ENCODE measurements at regions of chr4 and their contacts with region 1.

Region 1: DNA sequence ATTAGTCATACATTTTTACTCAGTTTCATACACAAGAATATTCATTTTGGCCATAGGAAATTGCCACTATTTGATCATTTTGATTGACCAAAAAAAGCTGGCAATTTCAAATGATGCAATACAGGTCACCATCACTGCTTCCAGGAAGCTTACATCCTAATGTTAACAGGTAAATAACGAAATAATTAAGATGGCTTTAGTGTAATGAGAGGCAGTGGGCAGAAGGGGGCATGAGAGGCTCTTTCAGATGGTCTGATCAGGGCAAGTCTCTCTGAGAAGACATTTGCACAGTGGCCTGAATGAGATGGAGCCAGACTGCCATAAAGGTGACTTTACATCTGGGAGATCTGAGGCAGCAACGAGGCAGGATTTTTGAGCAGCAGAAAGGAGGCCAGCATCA is 170.7 kb downstream of the SLIT2 start:
- DNase-seq: peak; percentile 73

Region 2: DNA sequence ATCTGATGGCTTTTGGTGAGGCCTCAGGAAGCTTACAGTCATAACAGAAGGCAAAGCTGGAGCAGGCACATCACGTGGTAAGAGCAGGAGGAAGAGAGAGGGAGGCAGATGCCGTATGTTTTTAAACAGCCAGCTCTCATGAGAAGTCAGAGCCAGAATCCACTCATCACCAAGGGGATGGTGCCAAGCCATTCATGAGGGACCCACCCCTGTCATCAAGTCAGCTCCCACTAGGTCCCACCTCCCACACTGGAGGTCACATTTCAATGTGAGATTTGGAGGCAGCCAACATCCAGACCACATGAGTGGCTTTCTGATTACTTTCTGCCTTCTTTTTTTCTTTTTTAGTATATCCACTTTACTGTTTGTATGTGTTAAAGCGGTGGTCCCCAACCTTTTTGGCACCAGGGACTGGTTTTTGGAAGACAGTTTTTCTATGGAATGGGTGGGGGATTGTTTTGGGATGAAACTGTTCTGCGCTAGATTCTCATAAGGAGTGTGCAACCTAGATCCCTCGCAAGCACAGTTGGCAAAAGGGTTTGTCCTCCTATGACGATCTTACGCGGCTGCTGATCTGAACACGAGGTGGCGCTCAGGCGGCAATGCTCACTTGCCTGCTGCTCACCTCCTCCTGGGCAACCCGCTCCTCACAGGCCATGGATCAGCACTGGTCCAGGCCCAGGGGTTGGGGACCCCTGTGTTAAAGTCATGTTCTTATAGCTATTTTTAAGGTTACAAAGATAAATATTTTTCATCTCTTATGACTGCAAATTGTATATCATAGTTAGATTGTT is 109.0 kb before region 1 on chr4:
- in situ Hi-C with region 1: loop called (anchors 25 kb)
- DNase-seq: peak; percentile 76

Region 3: DNA sequence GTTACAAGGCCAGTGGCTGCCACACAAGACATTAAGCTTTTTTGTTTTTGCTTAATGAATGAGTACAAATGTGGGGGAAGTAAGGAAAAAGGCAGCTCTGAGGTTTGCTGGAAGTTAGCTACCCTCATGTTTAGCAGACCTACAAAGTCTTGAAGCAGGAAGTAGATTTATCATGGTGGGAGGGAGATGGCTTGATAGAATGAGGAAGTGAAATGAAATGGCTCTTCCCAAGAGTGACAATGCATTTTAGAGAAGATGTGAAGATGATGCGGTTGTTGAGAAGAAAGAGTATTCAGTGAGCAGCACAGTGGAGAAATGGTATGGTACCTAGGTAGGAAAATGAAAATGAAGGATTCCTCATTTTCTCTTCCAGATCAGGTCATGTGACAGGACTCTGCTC is 62.7 kb before region 1 on chr4:
- in situ Hi-C with region 1: no loop called
- DNase-seq: no peak